ENCODE measurements at regions of chr11 and their contacts with region 1.

Region 1: GRCh38 chr11:62787005-62787759 is at the start of gene TMEM179B:
- DNase-seq: peak; percentile 93 to 100 (median 97)
- ATAC-seq: peak; percentile 70 to 78 (median 74)
- H3K4me3 ChIP-seq: peak within 1 kb of the TSS; percentile 85 to 96
- H3K4me3 Mint-ChIP-seq: peak within 1 kb of the TSS; percentile 91 to 93 (median 91)
- H3K27ac ChIP-seq: peak within 1 kb of the TSS; percentile 77
- H3K27ac Mint-ChIP-seq: peak within 1 kb of the TSS; percentile 95 to 96
- H3K4me1 ChIP-seq: peaks cover 15 to 48% of the 10 kb centered on the region in 2 experiments
- H3K4me1 Mint-ChIP-seq: peaks cover 37 to 49% (median 46%) of the 10 kb centered on the region in 3 donors
- H3K27me3 ChIP-seq: no peaks in the 10 kb centered on the region
- H3K27me3 Mint-ChIP-seq: no peaks in the 10 kb centered on the region
- total RNA-seq, gene TMEM179B: 27.7 to 53.3 (median 46.5) TPM

Region 2: DNA sequence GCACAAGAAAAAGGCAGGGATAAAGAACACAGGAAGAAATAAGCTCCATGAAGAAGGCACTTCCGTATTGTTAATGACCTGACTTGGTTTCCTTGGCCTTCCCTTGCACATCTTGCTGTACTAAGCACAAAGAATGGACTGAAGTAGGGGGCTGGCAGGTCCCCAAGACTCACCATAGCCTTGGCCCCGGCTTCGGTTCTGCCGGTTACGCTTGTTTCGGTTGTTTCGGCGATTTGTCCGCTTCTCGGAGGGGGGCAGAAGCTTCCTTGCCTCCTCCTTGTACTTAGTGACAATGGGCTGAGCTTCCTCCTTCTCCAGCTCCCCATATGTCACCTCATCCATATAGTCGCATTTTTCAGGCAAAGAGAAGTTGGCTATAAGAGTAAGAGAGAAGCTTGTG is 70.4 kb before region 1 on chr11:
- CTCF ChIA-PET with region 1: no interaction called
- POLR2A ChIA-PET with region 1: no interaction called
- DNase-seq: no peak
- ATAC-seq: no peak
- H3K4me3 ChIP-seq: no peak overlapping the region
- H3K4me3 Mint-ChIP-seq: no peak overlapping the region
- H3K27ac ChIP-seq: no peak overlapping the region
- H3K27ac Mint-ChIP-seq: no peak overlapping the region
- H3K4me1 ChIP-seq: peaks cover 0 to 2% of the 10 kb centered on the region in 2 experiments
- H3K4me1 Mint-ChIP-seq: peaks cover 36 to 64% (median 58%) of the 10 kb centered on the region in 3 donors
- H3K27me3 ChIP-seq: no peaks in the 10 kb centered on the region
- H3K27me3 Mint-ChIP-seq: no peaks in the 10 kb centered on the region

Region 3: DNA sequence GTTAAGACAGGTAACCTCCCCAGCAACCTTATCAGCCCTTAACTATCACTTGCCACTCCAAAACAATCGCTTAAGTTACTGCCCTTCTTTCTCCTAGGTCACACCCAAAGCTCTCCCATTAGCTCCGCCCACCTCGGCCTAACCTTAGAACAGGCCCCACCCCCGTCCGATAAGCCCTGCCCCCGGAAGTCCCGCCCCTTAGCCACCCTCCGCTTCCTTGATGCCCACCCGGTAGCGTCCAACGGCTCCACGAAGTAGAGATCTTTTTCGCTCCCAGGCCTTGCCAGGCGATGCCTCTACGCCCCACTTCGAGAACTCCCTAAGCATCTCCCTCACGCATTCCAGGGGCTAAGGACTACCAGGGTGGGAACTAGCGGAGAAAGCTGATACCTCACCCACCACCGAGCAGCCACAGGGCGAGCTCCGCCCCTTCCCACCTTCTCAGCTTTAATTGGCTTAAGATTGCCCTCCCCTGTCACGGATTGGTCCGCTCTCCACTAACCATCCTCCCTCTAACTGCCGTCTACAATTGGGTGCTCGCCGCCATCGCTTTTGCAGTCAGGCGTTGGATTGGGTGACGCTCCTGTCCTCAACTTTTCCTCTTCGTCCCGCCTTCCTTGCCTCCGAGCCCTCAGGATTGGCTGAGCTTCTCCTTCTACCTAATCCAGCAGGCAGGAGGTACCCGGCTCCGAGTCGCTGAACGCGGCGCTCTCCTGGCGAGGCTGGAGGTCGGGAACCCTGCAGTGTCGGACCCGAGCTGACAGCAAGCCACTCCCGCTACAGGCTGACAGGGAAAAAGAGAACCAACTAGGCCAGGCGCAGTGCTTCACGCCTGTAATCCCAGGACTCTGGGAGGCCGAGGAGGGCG is 33.2 kb before region 1 on chr11 and contains the start of gene ZBTB3:
- CTCF ChIA-PET with region 1: interaction called, 5 to 32 read pairs
- POLR2A ChIA-PET with region 1: interaction called in 1 of 2 experiments, 14 read pairs
- DNase-seq: peak; percentile 92 to 99 (median 96)
- ATAC-seq: peak; percentile 94 to 95 (median 95)
- H3K4me3 ChIP-seq: peak within 1 kb of the TSS; percentile 81 to 88
- H3K4me3 Mint-ChIP-seq: peak within 1 kb of the TSS; percentile 83 to 97 (median 91)
- H3K27ac ChIP-seq: peak within 1 kb of the TSS; percentile 76
- H3K27ac Mint-ChIP-seq: peak within 1 kb of the TSS; percentile 96 to 99
- H3K4me1 ChIP-seq: peaks cover 4 to 37% of the 10 kb centered on the region in 2 experiments
- H3K4me1 Mint-ChIP-seq: peaks cover 15 to 30% (median 28%) of the 10 kb centered on the region in 3 donors
- H3K27me3 ChIP-seq: no peaks in the 10 kb centered on the region
- H3K27me3 Mint-ChIP-seq: no peaks in the 10 kb centered on the region
- total RNA-seq, gene ZBTB3: 5.9 to 24.6 (median 22.9) TPM

Region 4: DNA sequence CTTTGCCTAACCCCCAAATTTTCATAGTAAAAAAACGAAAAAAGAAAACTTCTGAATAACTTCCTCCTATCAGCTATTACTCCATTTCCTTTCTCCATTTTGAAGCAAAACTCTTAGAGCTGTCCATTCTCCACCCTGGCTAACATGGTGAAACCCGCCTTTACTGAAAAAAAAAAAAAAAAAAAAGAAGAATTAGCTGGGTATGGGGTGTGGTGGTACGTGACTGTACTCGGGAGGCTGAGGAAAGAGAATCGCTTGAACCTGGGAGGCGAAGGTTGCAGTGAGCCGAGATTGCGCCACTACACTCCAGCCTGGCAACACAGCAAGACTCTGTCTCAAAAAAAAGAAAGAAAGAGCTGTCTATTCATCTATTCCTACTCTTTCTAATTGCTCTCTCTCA is 29.4 kb after region 1 on chr11:
- CTCF ChIA-PET with region 1: interaction called in 1 of 2 experiments, 5 read pairs
- POLR2A ChIA-PET with region 1: interaction called in 1 of 2 experiments, 16 read pairs
- DNase-seq: no peak
- ATAC-seq: no peak
- H3K4me3 ChIP-seq: no peak overlapping the region
- H3K4me3 Mint-ChIP-seq: no peak overlapping the region
- H3K27ac ChIP-seq: no peak overlapping the region
- H3K27ac Mint-ChIP-seq: no peak overlapping the region
- H3K4me1 ChIP-seq: no peaks in the 10 kb centered on the region
- H3K4me1 Mint-ChIP-seq: no peaks in the 10 kb centered on the region
- H3K27me3 ChIP-seq: no peaks in the 10 kb centered on the region
- H3K27me3 Mint-ChIP-seq: no peaks in the 10 kb centered on the region

Region 5: DNA sequence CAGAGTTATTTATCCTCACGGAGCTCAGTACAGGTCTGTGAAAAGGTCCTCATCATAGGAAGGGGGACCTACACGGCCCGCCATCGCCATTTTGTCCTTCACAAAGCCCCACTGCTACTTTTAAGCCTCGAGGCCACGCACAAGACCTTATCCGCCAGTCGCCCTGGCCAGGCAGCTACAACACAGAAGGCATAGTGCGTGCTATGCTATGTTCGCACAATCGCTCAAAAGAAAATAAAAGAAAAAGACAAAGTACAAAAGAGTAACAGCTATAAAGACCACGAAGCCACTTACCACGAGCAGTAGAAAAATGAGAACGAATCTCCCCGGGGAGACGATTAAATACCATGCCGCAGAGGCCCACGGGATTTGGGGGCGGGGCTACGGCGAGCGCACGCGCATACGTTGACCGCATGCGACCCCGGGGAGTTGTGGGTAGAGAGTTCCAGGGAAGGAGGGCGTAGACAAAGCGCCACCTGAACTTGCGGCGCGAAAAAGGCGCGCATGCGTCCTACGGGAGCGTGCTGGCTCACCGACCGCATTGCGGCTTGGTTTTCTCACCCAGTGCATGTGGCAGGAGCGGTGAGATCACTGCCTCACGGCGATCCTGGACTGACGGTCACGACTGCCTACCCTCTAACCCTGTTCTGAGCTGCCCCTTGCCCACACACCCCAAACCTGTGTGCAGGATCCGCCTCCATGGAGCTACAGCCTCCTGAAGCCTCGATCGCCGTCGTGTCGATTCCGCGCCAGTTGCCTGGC is 68.6 kb after region 1 on chr11:
- CTCF ChIA-PET with region 1: interaction called in 1 of 2 experiments, 7 read pairs
- POLR2A ChIA-PET with region 1: interaction called, 5 to 23 read pairs
- DNase-seq: peak; percentile 93 to 99 (median 96)
- ATAC-seq: peak; percentile 89 to 94 (median 92)
- H3K4me3 ChIP-seq: peak overlapping the region; percentile 81 to 100
- H3K4me3 Mint-ChIP-seq: peak overlapping the region; percentile 93 to 98 (median 97)
- H3K27ac ChIP-seq: peak overlapping the region; percentile 62
- H3K27ac Mint-ChIP-seq: peak overlapping the region; percentile 94 to 96
- H3K4me1 ChIP-seq: peaks cover 32 to 37% of the 10 kb centered on the region in 2 experiments
- H3K4me1 Mint-ChIP-seq: peaks cover 45 to 65% (median 63%) of the 10 kb centered on the region in 3 donors
- H3K27me3 ChIP-seq: no peaks in the 10 kb centered on the region
- H3K27me3 Mint-ChIP-seq: no peaks in the 10 kb centered on the region

Region 6: DNA sequence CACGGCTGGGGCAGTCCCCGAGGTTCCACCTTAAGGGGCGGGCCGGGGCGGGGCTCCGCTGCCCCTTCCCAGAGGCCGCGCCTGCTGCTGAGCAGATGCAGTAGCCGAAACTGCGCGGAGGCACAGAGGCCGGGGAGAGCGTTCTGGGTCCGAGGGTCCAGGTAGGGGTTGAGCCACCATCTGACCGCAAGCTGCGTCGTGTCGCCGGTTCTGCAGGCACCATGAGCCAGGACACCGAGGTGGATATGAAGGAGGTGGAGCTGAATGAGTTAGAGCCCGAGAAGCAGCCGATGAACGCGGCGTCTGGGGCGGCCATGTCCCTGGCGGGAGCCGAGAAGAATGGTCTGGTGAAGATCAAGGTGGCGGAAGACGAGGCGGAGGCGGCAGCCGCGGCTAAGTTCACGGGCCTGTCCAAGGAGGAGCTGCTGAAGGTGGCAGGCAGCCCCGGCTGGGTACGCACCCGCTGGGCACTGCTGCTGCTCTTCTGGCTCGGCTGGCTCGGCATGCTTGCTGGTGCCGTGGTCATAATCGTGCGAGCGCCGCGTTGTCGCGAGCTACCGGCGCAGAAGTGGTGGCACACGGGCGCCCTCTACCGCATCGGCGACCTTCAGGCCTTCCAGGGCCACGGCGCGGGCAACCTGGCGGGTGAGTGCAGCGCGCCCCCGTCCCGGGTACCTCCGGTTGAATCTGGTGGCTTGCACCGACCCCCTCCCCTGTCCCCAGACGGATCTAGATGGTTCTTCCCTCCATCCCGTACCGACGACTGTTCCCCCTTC is 93.8 kb after region 1 on chr11 and contains the start of gene SLC3A2:
- CTCF ChIA-PET with region 1: interaction called in 1 of 2 experiments, 14 read pairs
- POLR2A ChIA-PET with region 1: no interaction called
- DNase-seq: peak; percentile 71 to 93 (median 83)
- ATAC-seq: peak; percentile 80 to 83 (median 82)
- H3K4me3 ChIP-seq: peak within 1 kb of the TSS; percentile 94 to 97
- H3K4me3 Mint-ChIP-seq: peak within 1 kb of the TSS; percentile 97 to 100 (median 100)
- H3K27ac ChIP-seq: peak within 1 kb of the TSS; percentile 98
- H3K27ac Mint-ChIP-seq: peak within 1 kb of the TSS; percentile 100
- H3K4me1 ChIP-seq: peaks cover 12 to 48% of the 10 kb centered on the region in 2 experiments
- H3K4me1 Mint-ChIP-seq: peaks cover 46 to 55% (median 50%) of the 10 kb centered on the region in 3 donors
- H3K27me3 ChIP-seq: no peaks in the 10 kb centered on the region
- H3K27me3 Mint-ChIP-seq: no peaks in the 10 kb centered on the region
- total RNA-seq, gene SLC3A2: 178 to 248 (median 237) TPM